Right lobe of liver (tissue), 6 donors: ENCODE measurements at regions of chr1 and their contacts with region 1.

Region 1: GRCh38 chr1:169610108-169610507 is 19.8 kb downstream of the SELP start:
- DNase-seq: no peak
- ATAC-seq: peak; percentile 56 to 88 (median 68)
- H3K4me3 ChIP-seq: no peak overlapping the region
- H3K27ac ChIP-seq: no peak overlapping the region
- H3K4me1 ChIP-seq: no peaks in the 10 kb centered on the region
- H3K27me3 ChIP-seq: no peaks in the 10 kb centered on the region
- CTCF ChIP-seq: no peak
- POLR2A ChIP-seq: no peak

Region 2: GRCh38 chr1:169707912-169708604 is 98.0 kb after region 1 on chr1:
- intact Hi-C with region 1: loop called in 1 of 2 experiments (anchors 10 kb)
- DNase-seq: no peak
- ATAC-seq: no peak
- H3K4me3 ChIP-seq: no peak overlapping the region
- H3K27ac ChIP-seq: no peak overlapping the region
- H3K4me1 ChIP-seq: peaks cover 0 to 6% (median 3%) of the 10 kb centered on the region in 4 donors
- H3K27me3 ChIP-seq: no peaks in the 10 kb centered on the region
- CTCF ChIP-seq: no peak
- POLR2A ChIP-seq: no peak

Region 3: DNA sequence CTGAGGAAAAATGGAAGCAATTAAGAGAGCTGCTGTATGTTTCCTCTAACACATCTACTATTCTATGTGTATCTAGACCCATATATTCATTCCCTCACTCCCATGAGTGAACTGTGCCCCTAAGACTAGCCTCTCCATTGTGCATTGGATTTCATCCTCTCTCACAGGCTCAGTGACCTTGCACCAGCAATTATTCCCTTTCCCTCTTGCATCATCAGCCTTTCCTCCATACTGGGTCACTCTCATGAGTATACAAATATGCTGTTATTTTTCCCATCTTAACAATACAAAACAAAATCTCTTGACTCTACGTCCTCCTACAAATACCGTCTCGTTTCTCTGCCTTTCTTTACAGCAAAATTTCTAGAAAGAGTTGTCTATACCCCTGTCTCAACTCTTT is 214.0 kb after region 1 on chr1:
- intact Hi-C with region 1: loop called in 1 of 2 experiments (anchors 10 kb)
- DNase-seq: no peak
- ATAC-seq: no peak
- H3K4me3 ChIP-seq: no peak overlapping the region
- H3K27ac ChIP-seq: no peak overlapping the region
- H3K4me1 ChIP-seq: no peaks in the 10 kb centered on the region
- H3K27me3 ChIP-seq: no peaks in the 10 kb centered on the region
- CTCF ChIP-seq: no peak
- POLR2A ChIP-seq: no peak